A549 (cell line): ENCODE measurements at regions of chr11 and their contacts with region 1.

Region 1: GRCh38 chr11:46520971-46521745 is 72.7 kb downstream of the AMBRA1 start:
- DNase-seq: no peak
- ATAC-seq: no peak
- H3K4me3 ChIP-seq: no peak overlapping the region
- H3K27ac ChIP-seq: no peak overlapping the region
- H3K4me1 ChIP-seq: peaks cover 23% of the 10 kb centered on the region
- CTCF ChIP-seq: no peak
- EP300 ChIP-seq: no peak
- POLR2A ChIP-seq: no peak
- RAD21 ChIP-seq: no peak

Region 2: DNA sequence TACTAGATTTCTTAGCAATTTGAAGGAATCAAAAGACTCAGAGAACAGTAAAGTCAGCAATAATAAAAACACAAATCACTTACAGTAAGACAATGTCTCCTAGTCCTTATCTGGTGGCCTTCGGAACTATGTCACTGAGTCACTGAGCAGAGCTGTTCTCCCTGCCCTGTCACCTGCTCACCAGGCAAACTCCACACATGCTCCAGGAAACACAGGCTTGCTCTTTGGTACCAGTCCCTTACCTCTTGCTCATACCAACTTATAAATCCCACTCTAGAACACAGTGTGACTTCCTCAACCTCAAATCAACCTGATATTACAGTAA is 48.5 kb before region 1 on chr11:
- CTCF ChIA-PET with region 1: no interaction called
- POLR2A ChIA-PET with region 1: no interaction called
- DNase-seq: no peak
- ATAC-seq: 0 out of 6 replicates have a peak, but pooled peaks of 1 of the 2 experiments have one; percentile 32
- H3K4me3 ChIP-seq: no peak overlapping the region
- H3K27ac ChIP-seq: no peak overlapping the region
- H3K4me1 ChIP-seq: peaks cover 21% of the 10 kb centered on the region
- CTCF ChIP-seq: no peak
- EP300 ChIP-seq: no peak
- POLR2A ChIP-seq: no peak
- RAD21 ChIP-seq: no peak

Region 3: GRCh38 chr11:46537537-46538295 is 16.6 kb after region 1 on chr11:
- CTCF ChIA-PET with region 1: interaction called, 10 read pairs
- POLR2A ChIA-PET with region 1: no interaction called
- DNase-seq: peak; percentile 75 to 83
- ATAC-seq: peak; percentile 96
- H3K4me3 ChIP-seq: no peak overlapping the region
- H3K27ac ChIP-seq: no peak overlapping the region
- H3K4me1 ChIP-seq: 0 out of 3 replicates have a peak, but pooled peaks cover 4% of the 10 kb centered on the region
- CTCF ChIP-seq: peak; percentile 91
- EP300 ChIP-seq: no peak
- POLR2A ChIP-seq: no peak
- RAD21 ChIP-seq: peak; percentile 82 to 94

Region 4: DNA sequence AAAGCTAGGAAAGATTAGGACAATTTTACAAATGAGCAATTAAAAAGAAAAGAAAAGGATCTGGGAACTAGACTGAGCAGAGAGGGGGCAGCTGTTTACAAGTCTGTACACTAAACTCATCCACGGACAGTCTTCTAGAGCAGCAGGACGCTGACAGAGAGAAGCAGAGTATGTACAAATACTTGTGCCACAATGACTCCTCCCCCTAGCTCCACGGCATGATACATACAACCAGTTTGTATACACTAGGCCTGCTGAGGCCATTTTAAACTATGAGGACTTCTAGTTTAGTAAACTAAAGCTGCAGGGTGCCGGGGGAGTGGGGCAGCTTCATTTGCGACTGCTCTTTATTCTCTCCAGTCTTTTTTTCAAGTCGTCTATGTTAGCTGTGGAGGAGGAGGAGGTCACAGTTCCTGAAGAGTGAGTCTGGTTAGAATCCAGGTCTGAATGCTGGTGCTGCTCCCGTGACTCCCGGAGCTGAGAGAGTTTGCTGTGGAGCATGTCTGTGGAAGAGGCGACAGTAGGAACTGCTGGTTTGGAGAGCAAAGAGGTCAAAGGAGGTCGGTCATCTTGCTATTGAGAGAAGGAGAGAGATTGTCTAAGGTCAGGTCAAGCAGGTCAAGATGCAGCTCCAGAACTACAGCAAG is 222.7 kb after region 1 on chr11:
- CTCF ChIA-PET with region 1: no interaction called
- POLR2A ChIA-PET with region 1: no interaction called
- DNase-seq: no peak
- ATAC-seq: no peak
- H3K4me3 ChIP-seq: no peak overlapping the region
- H3K27ac ChIP-seq: no peak overlapping the region
- H3K4me1 ChIP-seq: no peaks in the 10 kb centered on the region
- CTCF ChIP-seq: no peak
- EP300 ChIP-seq: no peak
- POLR2A ChIP-seq: no peak
- RAD21 ChIP-seq: no peak